Ovary (tissue), 10 donors: ENCODE measurements at regions of chr20 and their contacts with region 1.

Region 1: GRCh38 chr20:34312544-34313217 is 9.5 kb upstream of the AHCY start:
- DNase-seq: peak; percentile 81 to 89 (median 84)
- H3K4me3 ChIP-seq: no peak overlapping the region
- H3K27ac ChIP-seq: no peak overlapping the region
- H3K4me1 ChIP-seq: no peaks in the 10 kb centered on the region
- H3K27me3 ChIP-seq: no peaks in the 10 kb centered on the region
- CTCF ChIP-seq: peak; percentile 95 to 97 (median 96)
- EP300 ChIP-seq: no peak
- POLR2A ChIP-seq: no peak

Region 2: GRCh38 chr20:34190679-34191090 is 122.0 kb before region 1 on chr20:
- intact Hi-C with region 1: loop called in 1 of 4 experiments (anchors 10 kb)
- DNase-seq: peak; percentile 76 to 86 (median 81)
- H3K4me3 ChIP-seq: no peak overlapping the region
- H3K27ac ChIP-seq: no peak overlapping the region
- H3K4me1 ChIP-seq: no peaks in the 10 kb centered on the region
- H3K27me3 ChIP-seq: no peaks in the 10 kb centered on the region
- CTCF ChIP-seq: peak; percentile 61 to 78 (median 66)
- EP300 ChIP-seq: no peak
- POLR2A ChIP-seq: no peak

Region 3: GRCh38 chr20:34473262-34473883 is 160.7 kb after region 1 on chr20:
- intact Hi-C with region 1: loop called in 1 of 4 experiments (anchors 10 kb)
- DNase-seq: peak in 3 of 5 donors; percentile 28 to 54 (median 30)
- H3K4me3 ChIP-seq: no peak overlapping the region
- H3K27ac ChIP-seq: no peak overlapping the region
- H3K4me1 ChIP-seq: peaks cover 2% of the 10 kb centered on the region
- H3K27me3 ChIP-seq: no peaks in the 10 kb centered on the region
- CTCF ChIP-seq: no peak
- EP300 ChIP-seq: no peak
- POLR2A ChIP-seq: no peak

Region 4: GRCh38 chr20:34522969-34523871 is 210.5 kb after region 1 on chr20:
- intact Hi-C with region 1: loop called in 2 of 4 experiments (anchors 5 to 10 kb)
- DNase-seq: peak in 3 of 5 donors; percentile 42 to 59 (median 43)
- H3K4me3 ChIP-seq: no peak overlapping the region
- H3K27ac ChIP-seq: no peak overlapping the region
- H3K4me1 ChIP-seq: peaks cover 18% of the 10 kb centered on the region
- H3K27me3 ChIP-seq: no peaks in the 10 kb centered on the region
- CTCF ChIP-seq: peak in 2 of 3 donors; percentile 16 to 28
- EP300 ChIP-seq: no peak
- POLR2A ChIP-seq: no peak

Region 5: DNA sequence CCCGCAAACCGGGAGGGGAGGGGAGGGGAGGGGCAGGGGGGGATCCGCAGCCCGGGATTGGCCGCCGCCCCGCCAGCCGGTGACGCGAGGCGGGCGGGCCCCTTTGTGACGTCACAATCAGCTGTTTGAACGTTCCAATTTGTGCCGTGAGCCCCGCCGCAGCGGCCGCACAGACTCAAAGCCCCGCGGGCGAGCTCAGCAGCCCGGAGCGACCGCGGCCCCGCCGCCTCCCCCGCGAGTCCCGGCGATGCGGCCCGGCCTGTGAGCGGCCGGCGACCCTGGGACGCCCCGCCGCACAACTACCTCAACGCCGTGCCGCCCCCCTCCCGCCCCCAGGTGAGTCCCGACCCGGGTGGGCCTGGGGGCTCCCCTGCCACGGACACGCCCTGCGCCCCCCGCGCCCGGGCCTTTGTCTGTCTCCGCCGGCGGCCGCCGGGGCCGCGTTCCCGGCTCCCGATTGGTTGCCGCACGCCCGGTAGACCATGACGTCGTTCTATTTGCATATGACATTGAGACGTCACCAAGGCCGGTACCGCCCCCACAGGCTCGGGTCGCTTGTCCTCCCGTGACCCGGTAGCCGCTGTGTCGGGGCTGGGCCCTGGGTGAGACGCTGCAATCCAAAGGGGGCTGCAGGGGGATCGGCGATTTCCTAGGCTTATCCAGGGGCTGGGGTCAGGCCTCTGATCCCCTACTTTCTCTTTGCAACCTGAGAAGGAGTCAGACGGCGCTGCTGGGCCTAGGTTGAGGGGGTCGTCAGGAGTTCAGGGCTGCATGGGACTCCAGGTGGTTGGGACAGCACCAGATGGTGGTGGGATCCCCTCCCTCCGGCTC is 391.7 kb after region 1 on chr20 and contains the start of gene TP53INP2:
- intact Hi-C with region 1: loop called in 2 of 4 experiments (anchors 5 to 10 kb)
- DNase-seq: peak; percentile 90 to 95 (median 93)
- H3K4me3 ChIP-seq: peak within 1 kb of the TSS; percentile 68
- H3K27ac ChIP-seq: peak within 1 kb of the TSS; percentile 98 to 100
- H3K4me1 ChIP-seq: peaks cover 3% of the 10 kb centered on the region
- H3K27me3 ChIP-seq: no peaks in the 10 kb centered on the region
- CTCF ChIP-seq: peak in 2 of 3 donors; percentile 4 to 30
- EP300 ChIP-seq: no peak
- POLR2A ChIP-seq: peak; percentile 87
- total RNA-seq, gene TP53INP2: 4.9 to 16.0 (median 13.3) TPM

Region 6: DNA sequence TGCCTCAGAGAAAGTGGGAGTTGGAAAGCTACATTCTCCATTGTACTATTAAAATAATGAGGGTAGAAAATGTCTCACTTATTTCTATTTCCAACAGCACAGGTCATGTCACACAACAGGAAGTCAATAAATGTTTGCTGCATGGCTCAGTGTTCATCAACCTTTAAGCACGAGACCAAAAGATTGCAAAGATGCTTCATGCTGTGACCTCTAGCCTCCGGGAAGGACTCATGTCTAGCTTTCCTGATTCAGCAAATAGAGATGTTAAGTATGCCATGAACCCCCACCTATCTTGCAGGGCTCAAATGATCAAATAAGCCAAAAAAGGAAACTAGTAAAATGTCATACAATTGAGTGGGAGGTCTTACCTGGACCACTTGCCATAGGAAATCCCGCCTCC is 455.4 kb after region 1 on chr20:
- intact Hi-C with region 1: loop called in 2 of 4 experiments (anchors 5 to 10 kb)
- DNase-seq: no peak
- H3K4me3 ChIP-seq: no peak overlapping the region
- H3K27ac ChIP-seq: no peak overlapping the region
- H3K4me1 ChIP-seq: no peaks in the 10 kb centered on the region
- H3K27me3 ChIP-seq: no peaks in the 10 kb centered on the region
- CTCF ChIP-seq: no peak
- EP300 ChIP-seq: no peak
- POLR2A ChIP-seq: no peak

Region 7: GRCh38 chr20:34776177-34776576 is 463.5 kb after region 1 on chr20:
- intact Hi-C with region 1: loop called in 2 of 4 experiments (anchors 5 to 10 kb)
- DNase-seq: no peak
- H3K4me3 ChIP-seq: no peak overlapping the region
- H3K27ac ChIP-seq: no peak overlapping the region
- H3K4me1 ChIP-seq: no peaks in the 10 kb centered on the region
- H3K27me3 ChIP-seq: no peaks in the 10 kb centered on the region
- CTCF ChIP-seq: no peak
- EP300 ChIP-seq: no peak
- POLR2A ChIP-seq: no peak